ENCODE measurements at regions of chr10 and their contacts with region 1.

Region 1: GRCh38 chr10:23158370-23158769 is 33.7 kb upstream of the PTF1A start:
- DNase-seq: peak; percentile 64
- ATAC-seq: peak; percentile 81
- H3K4me3 ChIP-seq: no peak overlapping the region
- H3K27ac ChIP-seq: no peak overlapping the region
- H3K4me1 ChIP-seq: 0 out of 2 replicates have a peak, but pooled peaks cover 3% of the 10 kb centered on the region
- H3K27me3 ChIP-seq: peaks cover 17% of the 10 kb centered on the region
- CTCF ChIP-seq: peak; percentile 83

Region 2: DNA sequence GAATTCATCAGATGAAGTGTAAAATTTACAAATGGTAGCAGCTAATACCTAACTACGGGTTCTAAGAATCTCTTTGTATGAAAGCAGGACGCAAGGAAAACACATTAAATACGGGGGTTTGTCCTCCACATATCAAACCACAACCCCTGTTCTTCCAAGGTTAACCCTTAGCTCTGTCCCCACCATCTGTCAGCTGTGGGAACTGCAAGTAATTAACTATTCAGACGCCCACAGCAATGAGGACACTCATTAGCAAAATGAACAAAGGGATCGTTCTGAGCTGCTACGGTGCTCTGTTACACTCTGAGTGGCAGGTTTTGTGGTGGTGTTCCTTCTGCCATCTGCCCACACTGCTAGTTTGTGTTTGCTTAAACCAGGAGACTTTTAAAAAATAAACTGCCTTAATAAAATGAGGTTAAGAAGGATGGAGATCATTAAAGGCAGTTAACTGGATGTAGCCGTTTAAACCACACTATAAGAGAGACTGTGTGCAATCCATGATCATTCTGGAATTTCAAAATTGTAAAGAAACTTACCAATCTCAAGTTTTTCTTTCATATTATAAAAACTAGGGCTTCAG is 134.9 kb after region 1 on chr10:
- CTCF ChIA-PET with region 1: interaction called, 5 read pairs
- POLR2A ChIA-PET with region 1: no interaction called
- intact Hi-C with region 1: loop called (anchors 2 kb)
- DNase-seq: peak; percentile 56
- ATAC-seq: peak; percentile 46; the same call in 1 of the 2 replicates
- H3K4me3 ChIP-seq: no peak overlapping the region
- H3K27ac ChIP-seq: no peak overlapping the region
- H3K4me1 ChIP-seq: no peaks in the 10 kb centered on the region
- H3K27me3 ChIP-seq: peaks cover 18% of the 10 kb centered on the region
- CTCF ChIP-seq: peak; percentile 62

Region 3: GRCh38 chr10:23657677-23658076 is 499.3 kb after region 1 on chr10:
- CTCF ChIA-PET with region 1: no interaction called
- POLR2A ChIA-PET with region 1: no interaction called
- intact Hi-C with region 1: no loop called
- DNase-seq: no peak
- ATAC-seq: no peak
- H3K4me3 ChIP-seq: no peak overlapping the region
- H3K27ac ChIP-seq: no peak overlapping the region
- H3K4me1 ChIP-seq: no peaks in the 10 kb centered on the region
- H3K27me3 ChIP-seq: no peaks in the 10 kb centered on the region
- CTCF ChIP-seq: no peak

Measured in PC-3 (cell line).